Posterior vena cava (tissue), 2 donors: ENCODE measurements at regions of chrX and their contacts with region 1.

Region 1: GRCh38 chrX:18899796-18900447 is 84.0 kb downstream of the PHKA2 start:
- DNase-seq: no peak

Region 2: GRCh38 chrX:18410043-18410442 is 489.9 kb before region 1 on chrX:
- intact Hi-C with region 1: loop called in 1 of 2 experiments (anchors 10 kb)
- DNase-seq: no peak

Region 3: DNA sequence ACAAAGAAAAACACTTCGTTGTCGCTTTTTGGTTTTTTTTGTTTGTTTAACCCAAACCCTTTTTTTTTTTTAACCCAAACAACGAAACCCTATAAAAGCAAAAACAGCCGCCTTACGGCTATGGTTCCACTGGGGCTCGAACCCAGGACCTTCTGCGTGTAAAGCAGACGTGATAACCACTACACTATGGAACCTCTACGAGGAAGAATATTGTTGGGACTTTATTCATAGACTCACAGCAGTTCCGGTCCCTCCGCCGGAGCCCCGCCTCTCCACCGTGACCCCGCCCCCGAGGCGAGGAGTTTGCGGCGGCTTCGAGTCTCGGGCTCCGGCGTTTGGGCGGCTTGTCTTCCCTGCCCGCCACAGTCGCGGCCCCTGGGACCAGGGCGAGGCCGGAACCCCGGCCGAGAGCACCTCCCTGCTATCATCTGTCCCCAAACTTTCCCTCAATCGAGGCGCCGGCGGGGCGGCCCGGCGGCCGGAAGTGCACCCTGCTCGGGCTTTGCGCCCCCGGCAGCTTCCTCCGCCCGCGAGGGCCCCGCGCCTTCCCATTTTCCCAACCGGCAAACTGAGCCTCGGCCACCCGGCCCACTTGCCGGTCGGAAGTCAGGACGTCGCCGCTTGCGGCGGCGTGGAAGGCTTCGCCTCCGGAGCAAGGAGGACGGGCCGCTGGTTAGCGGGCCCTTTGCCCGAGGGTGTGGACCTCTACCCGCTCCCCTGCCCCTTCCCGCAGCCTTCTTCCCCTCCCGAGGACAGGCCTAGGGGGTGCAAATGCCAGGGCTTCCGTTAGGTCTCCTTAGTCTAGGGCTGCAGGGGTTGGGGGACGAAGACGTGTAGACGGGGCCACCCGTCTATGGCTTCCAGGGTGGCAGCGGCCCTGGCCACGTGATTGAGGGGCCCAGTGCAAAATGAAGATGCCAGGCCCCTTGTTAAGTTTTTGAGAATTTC is 224.9 kb before region 1 on chrX:
- intact Hi-C with region 1: loop called in 1 of 2 experiments (anchors 10 kb)
- DNase-seq: peak; percentile 92